CD8-positive, alpha-beta T cell (primary cell): ENCODE measurements at regions of chr22 and their contacts with region 1.

Region 1: DNA sequence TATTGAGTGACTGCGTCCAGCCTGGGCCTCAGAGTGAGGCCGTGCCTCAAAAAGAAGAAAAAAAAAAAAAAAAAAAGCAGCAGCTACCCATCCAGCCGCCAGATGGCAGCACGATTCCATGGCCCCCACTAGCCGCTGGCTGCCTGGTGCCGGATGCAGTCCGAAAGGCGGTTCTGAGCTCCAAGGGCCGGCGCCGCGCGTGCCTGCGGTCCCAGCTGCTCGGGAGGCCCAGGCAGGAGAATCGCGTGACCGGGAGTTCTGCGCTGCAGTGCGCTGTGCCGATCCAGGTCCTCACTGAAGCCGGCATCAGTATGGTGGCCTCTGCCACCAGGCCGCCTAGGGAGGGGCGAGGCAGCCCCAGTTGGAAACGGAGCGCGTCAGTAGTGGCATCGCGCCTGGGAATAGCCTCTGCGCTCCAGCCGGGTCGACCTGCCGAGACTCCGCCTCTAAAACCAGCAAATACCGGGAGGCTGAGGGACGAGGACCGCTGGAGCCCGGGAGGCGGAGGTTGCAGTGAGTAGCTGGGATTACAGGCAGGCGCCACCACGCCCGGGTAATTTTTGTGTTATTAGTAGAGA is 19.3 kb downstream of the SCARF2 start:
- DNase-seq: peak; percentile 40 to 88 (median 76)
- ATAC-seq: peak; percentile 82
- H3K4me3 ChIP-seq: peak overlapping the region; percentile 37 to 44
- H3K4me3 Mint-ChIP-seq: peak overlapping the region; percentile 68
- H3K27ac ChIP-seq: no peak overlapping the region
- H3K27ac Mint-ChIP-seq: no peak overlapping the region
- H3K4me1 ChIP-seq: no peaks in the 10 kb centered on the region
- H3K4me1 Mint-ChIP-seq: peaks cover 3% of the 10 kb centered on the region
- H3K27me3 ChIP-seq: no peaks in the 10 kb centered on the region
- H3K27me3 Mint-ChIP-seq: no peaks in the 10 kb centered on the region
- CTCF ChIP-seq: peak; percentile 92

Region 2: GRCh38 chr22:20441631-20442484 is 23.6 kb after region 1 on chr22:
- CTCF ChIA-PET with region 1: interaction called, 14 read pairs
- POLR2A ChIA-PET with region 1: no interaction called
- intact Hi-C with region 1: no loop called
- DNase-seq: no peak
- ATAC-seq: no peak
- H3K4me3 ChIP-seq: no peak overlapping the region
- H3K4me3 Mint-ChIP-seq: no peak overlapping the region
- H3K27ac ChIP-seq: no peak overlapping the region
- H3K27ac Mint-ChIP-seq: no peak overlapping the region
- H3K4me1 ChIP-seq: peaks cover 12% of the 10 kb centered on the region
- H3K4me1 Mint-ChIP-seq: peaks cover 11% of the 10 kb centered on the region
- H3K27me3 ChIP-seq: peaks cover 10 to 13% of the 10 kb centered on the region in 2 experiments
- H3K27me3 Mint-ChIP-seq: peaks cover 11% of the 10 kb centered on the region
- CTCF ChIP-seq: no peak

Region 3: DNA sequence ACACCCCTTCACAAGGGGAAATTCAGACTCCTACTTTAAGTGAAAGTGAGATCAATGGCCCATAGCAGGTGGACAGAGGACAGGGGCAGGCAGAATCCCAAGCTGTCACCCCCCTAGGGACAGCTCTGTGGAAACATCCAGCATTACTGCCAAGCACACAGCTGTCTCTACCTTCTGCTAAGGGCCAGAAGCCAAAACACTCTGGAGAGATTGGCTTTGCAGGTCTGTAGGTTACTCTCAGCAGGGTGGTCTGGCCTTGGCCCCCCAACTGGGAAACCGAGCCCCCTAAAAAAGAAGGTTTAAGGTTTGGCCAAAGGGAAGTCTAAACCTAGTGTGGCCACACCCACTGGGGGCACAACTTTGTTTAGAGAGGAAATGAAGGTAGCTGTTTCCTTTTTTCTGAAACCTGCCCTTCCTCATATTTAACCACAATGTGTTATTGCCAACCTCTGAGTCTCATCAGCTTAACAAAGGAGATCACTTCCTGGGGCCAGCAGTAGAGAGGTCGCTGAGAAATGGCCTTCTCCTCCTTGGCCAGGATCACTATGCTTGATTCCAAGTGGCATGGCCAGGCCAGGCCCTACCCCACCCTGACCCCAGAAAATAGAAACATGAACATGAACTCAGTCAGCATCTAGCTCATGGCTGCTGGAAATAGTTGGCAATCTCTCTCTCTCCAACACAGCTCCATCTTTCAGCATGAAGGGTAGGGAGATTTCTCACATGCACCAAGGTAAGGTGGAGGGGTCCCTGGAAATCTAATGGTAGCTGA is 45.2 kb after region 1 on chr22:
- CTCF ChIA-PET with region 1: interaction called, 15 read pairs
- POLR2A ChIA-PET with region 1: no interaction called
- intact Hi-C with region 1: no loop called
- DNase-seq: peak in 8 of 9 experiments; percentile 33 to 78 (median 60)
- ATAC-seq: peak; percentile 61
- H3K4me3 ChIP-seq: peak overlapping the region in 1 of 2 experiments; percentile 10
- H3K4me3 Mint-ChIP-seq: peak overlapping the region; percentile 74
- H3K27ac ChIP-seq: peak overlapping the region; percentile 84 to 90
- H3K27ac Mint-ChIP-seq: peak overlapping the region; percentile 98
- H3K4me1 ChIP-seq: peaks cover 57% of the 10 kb centered on the region
- H3K4me1 Mint-ChIP-seq: peaks cover 61% of the 10 kb centered on the region
- H3K27me3 ChIP-seq: no peaks in the 10 kb centered on the region
- H3K27me3 Mint-ChIP-seq: no peaks in the 10 kb centered on the region
- CTCF ChIP-seq: no peak

Region 4: DNA sequence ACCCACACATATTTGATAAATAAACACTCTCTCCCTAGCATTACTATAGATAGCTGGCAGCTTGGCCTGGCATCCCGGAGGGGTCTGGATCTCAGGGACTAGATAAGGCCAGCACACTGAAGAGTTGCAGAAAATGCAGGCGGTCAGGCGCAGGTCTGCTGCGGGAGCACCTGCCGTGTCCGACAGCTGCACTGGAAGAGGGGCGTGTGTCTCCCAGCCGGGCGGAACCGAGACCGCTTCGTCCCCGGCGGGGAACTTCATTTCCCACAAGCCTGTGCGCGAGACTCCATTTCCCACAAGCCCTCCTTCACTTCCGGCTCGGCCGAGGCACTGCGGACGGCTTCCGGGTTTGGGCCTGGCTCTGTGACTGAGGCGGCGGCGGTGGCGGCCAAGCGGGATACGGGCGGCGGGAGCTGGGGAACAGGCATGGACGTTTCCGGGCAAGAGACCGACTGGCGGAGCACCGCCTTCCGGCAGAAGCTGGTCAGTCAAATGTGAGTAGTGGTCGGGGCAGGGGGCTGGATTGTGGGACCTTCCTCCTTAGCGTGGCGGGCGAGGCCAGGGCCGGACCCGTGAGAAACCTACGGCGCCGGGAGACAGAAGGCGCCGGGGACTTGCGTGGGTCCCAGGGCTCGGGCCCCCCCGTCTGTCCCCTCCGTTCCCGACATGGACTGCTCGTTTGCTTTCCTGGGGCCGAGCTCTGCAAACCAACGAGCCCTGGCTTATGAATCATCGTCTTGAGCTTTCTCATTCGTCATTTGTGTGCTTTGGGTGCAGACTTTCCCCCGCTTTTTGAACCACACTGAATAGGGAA is 89.2 kb after region 1 on chr22 and contains the start of gene MED15:
- CTCF ChIA-PET with region 1: interaction called, 11 read pairs
- POLR2A ChIA-PET with region 1: no interaction called
- intact Hi-C with region 1: no loop called
- DNase-seq: peak; percentile 71 to 93 (median 88)
- ATAC-seq: peak; percentile 81
- H3K4me3 ChIP-seq: peak within 1 kb of the TSS; percentile 92 to 100
- H3K4me3 Mint-ChIP-seq: peak within 1 kb of the TSS; percentile 95
- H3K27ac ChIP-seq: peak within 1 kb of the TSS; percentile 86 to 95
- H3K27ac Mint-ChIP-seq: peak within 1 kb of the TSS; percentile 96
- H3K4me1 ChIP-seq: peaks cover 34% of the 10 kb centered on the region
- H3K4me1 Mint-ChIP-seq: peaks cover 49% of the 10 kb centered on the region
- H3K27me3 ChIP-seq: no peaks in the 10 kb centered on the region
- H3K27me3 Mint-ChIP-seq: no peaks in the 10 kb centered on the region
- CTCF ChIP-seq: no peak
- total RNA-seq, gene MED15: 316 TPM

Region 5: DNA sequence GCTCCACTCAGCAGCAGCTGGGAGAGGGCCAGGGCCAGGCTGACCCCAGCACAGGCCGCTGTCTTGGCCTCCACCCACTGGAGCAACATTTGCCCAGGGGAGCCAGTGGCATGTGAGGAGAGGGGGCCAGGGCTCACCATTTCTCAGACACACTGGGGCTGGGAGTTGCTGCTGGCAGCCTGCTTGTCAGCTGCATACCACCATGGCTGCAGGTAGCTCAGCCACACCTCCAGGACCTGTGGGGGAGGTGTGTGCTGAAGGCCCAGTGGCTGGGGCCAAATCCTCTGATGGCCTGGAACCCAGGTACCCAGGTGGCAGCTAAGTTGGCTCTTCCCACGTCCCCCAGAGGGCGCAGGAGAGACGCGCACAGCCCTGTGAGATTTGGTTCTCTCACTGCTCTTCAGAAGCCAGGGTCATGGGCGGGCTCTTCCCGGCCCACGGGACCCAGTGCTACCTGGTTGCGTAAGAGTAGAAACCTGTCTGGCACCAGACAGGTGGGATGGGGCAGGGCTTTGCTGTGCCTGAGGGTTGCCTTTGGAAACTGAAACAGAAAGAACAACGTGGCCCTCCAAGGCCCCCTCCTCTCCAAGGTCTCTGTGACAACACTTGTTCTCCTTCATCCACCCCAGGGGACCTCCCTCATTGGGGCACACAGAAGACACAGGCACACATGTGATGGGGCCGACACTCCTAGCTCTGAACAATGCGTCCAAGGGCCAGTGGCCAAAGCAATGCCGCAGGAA is 187.9 kb after region 1 on chr22:
- CTCF ChIA-PET with region 1: interaction called, 4 read pairs
- POLR2A ChIA-PET with region 1: interaction called, 3 read pairs
- intact Hi-C with region 1: loop called in 1 of 2 experiments (anchors 10 kb)
- DNase-seq: peak; percentile 38 to 85 (median 72)
- ATAC-seq: peak; percentile 96
- H3K4me3 ChIP-seq: no peak overlapping the region
- H3K4me3 Mint-ChIP-seq: no peak overlapping the region
- H3K27ac ChIP-seq: no peak overlapping the region
- H3K27ac Mint-ChIP-seq: no peak overlapping the region
- H3K4me1 ChIP-seq: peaks cover 7% of the 10 kb centered on the region
- H3K4me1 Mint-ChIP-seq: peaks cover 14% of the 10 kb centered on the region
- H3K27me3 ChIP-seq: no peaks in the 10 kb centered on the region
- H3K27me3 Mint-ChIP-seq: no peaks in the 10 kb centered on the region
- CTCF ChIP-seq: peak; percentile 71